Ascending aorta (tissue), 2 donors: ENCODE measurements at regions of chr11 and their contacts with region 1.

Region 1: GRCh38 chr11:45110562-45110961 is 35.9 kb upstream of the PRDM11 start:
- DNase-seq: no peak
- H3K4me3 ChIP-seq: no peak overlapping the region
- H3K27ac ChIP-seq: no peak overlapping the region
- H3K4me1 ChIP-seq: no peaks in the 10 kb centered on the region
- H3K27me3 ChIP-seq: no peaks in the 10 kb centered on the region
- CTCF ChIP-seq: peak; percentile 68 to 79 (median 76)

Region 2: GRCh38 chr11:44886790-44887140 is 223.8 kb before region 1 on chr11:
- intact Hi-C with region 1: no loop called
- DNase-seq: no peak
- H3K4me3 ChIP-seq: no peak overlapping the region
- H3K27ac ChIP-seq: no peak overlapping the region
- H3K4me1 ChIP-seq: no peaks in the 10 kb centered on the region
- H3K27me3 ChIP-seq: no peaks in the 10 kb centered on the region
- CTCF ChIP-seq: no peak

Region 3: GRCh38 chr11:45233121-45233803 is 122.7 kb after region 1 on chr11:
- intact Hi-C with region 1: loop called (anchors 1 kb)
- DNase-seq: peak in 1 of 2 donors; percentile 86
- H3K4me3 ChIP-seq: peak overlapping the region in 1 of 2 donors; percentile 33
- H3K27ac ChIP-seq: peak overlapping the region in 1 of 2 donors; percentile 26
- H3K4me1 ChIP-seq: peaks cover 3 to 7% of the 10 kb centered on the region in 2 donors
- H3K27me3 ChIP-seq: no peaks in the 10 kb centered on the region
- CTCF ChIP-seq: peak; percentile 58 to 85 (median 82)

Region 4: GRCh38 chr11:45289369-45289768 is 178.8 kb after region 1 on chr11:
- intact Hi-C with region 1: loop called (anchors 1 kb)
- DNase-seq: no peak
- H3K4me3 ChIP-seq: no peak overlapping the region
- H3K27ac ChIP-seq: no peak overlapping the region
- H3K4me1 ChIP-seq: peaks cover 0 to 4% of the 10 kb centered on the region in 2 donors
- H3K27me3 ChIP-seq: peaks cover 11% of the 10 kb centered on the region
- CTCF ChIP-seq: no peak